Calu3 (cell line): ENCODE measurements at regions of chr3 and their contacts with region 1.

Region 1: GRCh38 chr3:108985844-108986243 is 32.2 kb upstream of the GUCA1C start:
- DNase-seq: no peak
- H3K4me3 Mint-ChIP-seq: no peak overlapping the region
- H3K27ac Mint-ChIP-seq: no peak overlapping the region
- H3K4me1 Mint-ChIP-seq: no peaks in the 10 kb centered on the region
- H3K27me3 Mint-ChIP-seq: peaks cover 11% of the 10 kb centered on the region
- CTCF ChIP-seq: no peak

Region 2: GRCh38 chr3:108959017-108959416 is 26.8 kb before region 1 on chr3:
- CTCF ChIA-PET with region 1: interaction called, 11 read pairs
- intact Hi-C with region 1: no loop called
- DNase-seq: no peak
- H3K4me3 Mint-ChIP-seq: no peak overlapping the region
- H3K27ac Mint-ChIP-seq: no peak overlapping the region
- H3K4me1 Mint-ChIP-seq: no peaks in the 10 kb centered on the region
- H3K27me3 Mint-ChIP-seq: no peaks in the 10 kb centered on the region
- CTCF ChIP-seq: no peak